SK-N-SH (cell line): ENCODE measurements at regions of chr20 and their contacts with region 1.

Region 1: GRCh38 chr20:49219089-49219923 is at the start of gene DDX27:
- DNase-seq: peak; percentile 95
- H3K4me3 ChIP-seq: peak within 1 kb of the TSS; percentile 80 to 91
- H3K27ac ChIP-seq: peak within 1 kb of the TSS; percentile 65 to 76
- H3K4me1 ChIP-seq: peaks cover 0 to 8% of the 10 kb centered on the region in 2 experiments; a peak in 1 of 4 replicates
- H3K27me3 ChIP-seq: no peaks in the 10 kb centered on the region
- CTCF ChIP-seq: no peak
- EP300 ChIP-seq: no peak
- RAD21 ChIP-seq: no peak
- polyA plus RNA-seq, gene DDX27: 51.9 and 52.4 TPM in 2 replicates

Region 2: GRCh38 chr20:49118307-49118706 is 101.0 kb before region 1 on chr20:
- CTCF ChIA-PET with region 1: interaction called, 10 read pairs
- POLR2A ChIA-PET with region 1: no interaction called
- DNase-seq: no peak
- H3K4me3 ChIP-seq: no peak overlapping the region
- H3K27ac ChIP-seq: no peak overlapping the region
- H3K4me1 ChIP-seq: no peaks in the 10 kb centered on the region
- H3K27me3 ChIP-seq: no peaks in the 10 kb centered on the region
- CTCF ChIP-seq: no peak
- EP300 ChIP-seq: no peak
- RAD21 ChIP-seq: no peak

Region 3: DNA sequence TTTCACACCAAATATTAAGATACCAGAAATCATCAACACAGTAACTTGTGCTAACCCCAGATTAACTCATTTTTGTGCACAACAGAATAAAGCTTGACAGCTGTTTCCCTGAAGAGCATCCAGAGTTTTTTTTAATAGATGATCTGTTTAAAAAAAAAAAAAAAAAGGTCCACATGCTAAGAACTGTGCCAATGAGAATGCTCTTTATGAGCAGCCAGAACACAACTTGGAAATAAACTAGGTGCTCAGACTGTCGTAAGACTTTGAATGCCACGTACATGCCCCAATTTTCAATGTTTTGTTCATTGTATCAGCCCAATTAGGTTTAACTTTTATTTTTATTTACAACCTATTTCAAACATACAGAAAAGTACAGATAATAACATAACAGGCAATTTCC is 78.5 kb before region 1 on chr20:
- CTCF ChIA-PET with region 1: interaction called, 112 read pairs
- POLR2A ChIA-PET with region 1: no interaction called
- DNase-seq: no peak
- H3K4me3 ChIP-seq: no peak overlapping the region
- H3K27ac ChIP-seq: no peak overlapping the region; a peak in 1 of 4 replicates
- H3K4me1 ChIP-seq: no peaks in the 10 kb centered on the region
- H3K27me3 ChIP-seq: no peaks in the 10 kb centered on the region
- CTCF ChIP-seq: no peak
- EP300 ChIP-seq: no peak
- RAD21 ChIP-seq: no peak

Region 4: GRCh38 chr20:49166534-49167449 is 52.5 kb before region 1 on chr20:
- CTCF ChIA-PET with region 1: interaction called, 14 read pairs
- POLR2A ChIA-PET with region 1: no interaction called
- DNase-seq: no peak
- H3K4me3 ChIP-seq: no peak overlapping the region
- H3K27ac ChIP-seq: no peak overlapping the region
- H3K4me1 ChIP-seq: peaks cover 0 to 10% of the 10 kb centered on the region in 2 experiments; a peak in 1 of 4 replicates
- H3K27me3 ChIP-seq: no peaks in the 10 kb centered on the region
- CTCF ChIP-seq: no peak
- EP300 ChIP-seq: no peak
- RAD21 ChIP-seq: no peak

Region 5: GRCh38 chr20:49203746-49204145 is 15.6 kb before region 1 on chr20:
- CTCF ChIA-PET with region 1: interaction called, 12 read pairs
- POLR2A ChIA-PET with region 1: no interaction called
- DNase-seq: no peak
- H3K4me3 ChIP-seq: no peak overlapping the region
- H3K27ac ChIP-seq: no peak overlapping the region
- H3K4me1 ChIP-seq: no peaks in the 10 kb centered on the region
- H3K27me3 ChIP-seq: no peaks in the 10 kb centered on the region
- CTCF ChIP-seq: no peak
- EP300 ChIP-seq: no peak
- RAD21 ChIP-seq: no peak